ENCODE measurements at regions of chr16 and their contacts with region 1.

Region 1: DNA sequence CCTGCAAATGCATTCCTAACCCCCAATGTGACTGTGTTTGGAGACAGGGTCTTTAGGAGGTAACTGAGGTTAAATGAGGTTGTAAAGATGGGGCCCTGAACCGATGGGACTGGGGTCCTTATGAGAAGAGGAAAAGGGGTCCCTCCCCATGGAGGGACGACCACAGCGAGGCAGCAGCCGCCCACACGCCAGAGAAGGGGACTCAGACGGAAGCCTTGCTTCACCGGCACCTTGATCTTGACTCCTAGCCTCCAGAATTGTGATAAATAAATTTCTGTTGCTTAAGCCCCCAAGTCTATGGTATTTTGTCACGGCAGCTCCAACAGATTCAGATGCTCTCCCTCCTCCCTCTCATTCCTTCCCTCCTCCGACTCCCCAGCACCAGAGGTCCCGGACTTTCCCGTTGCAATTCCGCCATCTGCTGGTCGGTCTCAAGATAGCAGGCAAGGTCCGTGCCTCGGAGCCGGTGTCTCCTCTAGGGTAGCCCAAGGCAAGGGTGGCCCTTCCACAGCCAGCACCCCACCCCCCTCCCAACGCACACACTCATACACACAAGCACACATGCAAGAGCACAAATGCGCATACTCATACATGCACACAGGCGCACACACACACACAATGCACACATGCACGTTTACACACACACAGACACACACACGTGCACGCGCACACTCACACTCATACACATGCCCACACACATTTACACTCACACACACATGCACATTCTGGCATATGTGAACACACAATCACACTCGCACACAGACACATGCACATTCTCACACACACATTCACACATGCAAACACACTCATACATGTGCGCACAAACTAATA is 23.1 kb upstream of the C16orf78 start:
- DNase-seq: peak; percentile 26 to 90 (median 68)
- ATAC-seq: peak in 3 of 4 donors; percentile 73 to 85 (median 83)
- H3K4me3 ChIP-seq: no peak overlapping the region
- H3K27ac ChIP-seq: no peak overlapping the region
- H3K4me1 ChIP-seq: no peaks in the 10 kb centered on the region
- H3K27me3 ChIP-seq: peaks cover 0 to 2% (median 0%) of the 10 kb centered on the region in 4 donors
- CTCF ChIP-seq: peak; percentile 61 to 78 (median 71)

Region 2: GRCh38 chr16:48687421-48688038 is 663.0 kb before region 1 on chr16:
- intact Hi-C with region 1: loop called in 2 of 3 experiments (anchors 5 to 10 kb)
- DNase-seq: peak; percentile 35 to 57 (median 47)
- ATAC-seq: peak; percentile 61 to 95 (median 89)
- H3K4me3 ChIP-seq: no peak overlapping the region
- H3K27ac ChIP-seq: no peak overlapping the region
- H3K4me1 ChIP-seq: no peaks in the 10 kb centered on the region
- H3K27me3 ChIP-seq: no peaks in the 10 kb centered on the region
- CTCF ChIP-seq: peak; percentile 32 to 64 (median 54)

Region 3: DNA sequence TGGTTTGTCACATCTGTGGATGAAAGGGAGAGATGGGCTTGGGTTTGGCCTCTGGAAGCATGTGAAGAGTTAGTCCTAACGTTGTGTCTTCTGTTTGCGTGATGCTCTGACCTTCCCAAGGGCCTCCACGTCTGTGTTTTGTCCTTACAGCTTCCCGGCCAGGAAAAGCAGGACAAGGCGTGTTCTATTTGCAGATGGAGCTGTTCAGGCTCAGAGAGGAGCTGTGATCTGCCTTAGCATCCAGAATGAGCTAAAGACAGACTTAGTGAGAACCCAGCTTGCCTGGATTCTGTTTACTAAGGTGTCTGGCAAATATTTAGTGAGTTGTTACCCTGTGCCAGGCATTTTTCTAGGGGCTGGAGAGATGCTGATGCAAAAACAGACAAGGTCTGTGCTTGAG is 351.0 kb before region 1 on chr16:
- intact Hi-C with region 1: loop called in 1 of 3 experiments (anchors 10 kb)
- DNase-seq: no peak
- ATAC-seq: no peak
- H3K4me3 ChIP-seq: no peak overlapping the region
- H3K27ac ChIP-seq: no peak overlapping the region
- H3K4me1 ChIP-seq: no peaks in the 10 kb centered on the region
- H3K27me3 ChIP-seq: no peaks in the 10 kb centered on the region
- CTCF ChIP-seq: no peak

Region 4: GRCh38 chr16:49168126-49168525 is 182.4 kb before region 1 on chr16:
- intact Hi-C with region 1: no loop called
- DNase-seq: no peak
- ATAC-seq: no peak
- H3K4me3 ChIP-seq: no peak overlapping the region
- H3K27ac ChIP-seq: no peak overlapping the region
- H3K4me1 ChIP-seq: no peaks in the 10 kb centered on the region
- H3K27me3 ChIP-seq: peaks cover 0 to 10% (median 0%) of the 10 kb centered on the region in 4 donors
- CTCF ChIP-seq: no peak

Measured in pancreas (tissue), 10 donors.